Heart right ventricle (tissue), 16 donors: ENCODE measurements at regions of chr15 and their contacts with region 1.

Region 1: GRCh38 chr15:88982304-88982945 is 69.2 kb upstream of the MFGE8 start:
- DNase-seq: peak; percentile 63 to 95
- ATAC-seq: peak; percentile 92 to 98 (median 96)
- H3K4me3 ChIP-seq: no peak overlapping the region
- H3K27ac ChIP-seq: peak overlapping the region in 9 of 10 donors; percentile 48 to 80 (median 75)
- H3K4me1 ChIP-seq: peaks cover 5 to 22% (median 21%) of the 10 kb centered on the region in 9 donors
- H3K27me3 ChIP-seq: no peaks in the 10 kb centered on the region
- CTCF ChIP-seq: peak in 1 of 9 donors; percentile 4

Region 2: DNA sequence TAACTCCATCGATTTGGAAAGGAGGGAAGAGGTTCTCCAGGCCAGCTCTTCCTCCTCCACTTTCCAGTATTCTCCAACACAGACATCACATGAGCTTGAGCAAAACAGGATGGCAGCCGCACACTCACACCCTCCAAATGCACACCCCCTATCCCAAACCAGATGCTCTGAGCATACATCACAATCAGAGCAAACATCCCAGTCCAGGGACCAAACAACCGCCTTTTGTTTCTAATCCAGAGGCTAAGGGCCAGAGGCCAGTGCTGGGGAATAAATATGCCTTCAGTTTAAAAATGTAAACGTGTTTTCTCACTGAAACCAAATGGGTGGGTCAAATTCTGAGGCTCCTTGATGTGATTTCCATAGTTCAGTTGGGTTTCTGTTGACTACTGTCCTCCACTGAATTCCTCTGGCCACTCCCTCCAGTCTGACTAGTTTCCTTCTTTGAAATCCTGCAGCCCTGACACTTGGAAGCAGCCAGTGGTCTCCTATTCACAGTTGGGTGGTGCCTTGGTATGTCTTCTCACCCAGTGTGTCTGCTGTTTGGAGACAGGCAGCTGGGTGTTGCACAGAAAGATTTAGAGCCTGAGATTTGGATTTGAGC is 50.1 kb before region 1 on chr15:
- intact Hi-C with region 1: loop called in 1 of 10 experiments (anchors 2 kb)
- DNase-seq: peak in 1 of 2 donors; percentile 45
- ATAC-seq: peak; percentile 43 to 95 (median 89)
- H3K4me3 ChIP-seq: no peak overlapping the region
- H3K27ac ChIP-seq: peak overlapping the region; percentile 36 to 88 (median 75)
- H3K4me1 ChIP-seq: peaks cover 5 to 28% (median 24%) of the 10 kb centered on the region in 9 donors
- H3K27me3 ChIP-seq: no peaks in the 10 kb centered on the region
- CTCF ChIP-seq: no peak

Region 3: GRCh38 chr15:89041507-89041906 is 59.1 kb after region 1 on chr15:
- intact Hi-C with region 1: no loop called
- DNase-seq: no peak
- ATAC-seq: peak in 2 of 8 donors; percentile 25 to 38
- H3K4me3 ChIP-seq: peak overlapping the region in 1 of 10 donors; percentile 3
- H3K27ac ChIP-seq: peak overlapping the region in 1 of 10 donors; percentile 12
- H3K4me1 ChIP-seq: peaks cover 0 to 5% (median 0%) of the 10 kb centered on the region in 9 donors
- H3K27me3 ChIP-seq: no peaks in the 10 kb centered on the region
- CTCF ChIP-seq: no peak